Ascending aorta (tissue), 2 donors: ENCODE measurements at regions of chr21 and their contacts with region 1.

Region 1: DNA sequence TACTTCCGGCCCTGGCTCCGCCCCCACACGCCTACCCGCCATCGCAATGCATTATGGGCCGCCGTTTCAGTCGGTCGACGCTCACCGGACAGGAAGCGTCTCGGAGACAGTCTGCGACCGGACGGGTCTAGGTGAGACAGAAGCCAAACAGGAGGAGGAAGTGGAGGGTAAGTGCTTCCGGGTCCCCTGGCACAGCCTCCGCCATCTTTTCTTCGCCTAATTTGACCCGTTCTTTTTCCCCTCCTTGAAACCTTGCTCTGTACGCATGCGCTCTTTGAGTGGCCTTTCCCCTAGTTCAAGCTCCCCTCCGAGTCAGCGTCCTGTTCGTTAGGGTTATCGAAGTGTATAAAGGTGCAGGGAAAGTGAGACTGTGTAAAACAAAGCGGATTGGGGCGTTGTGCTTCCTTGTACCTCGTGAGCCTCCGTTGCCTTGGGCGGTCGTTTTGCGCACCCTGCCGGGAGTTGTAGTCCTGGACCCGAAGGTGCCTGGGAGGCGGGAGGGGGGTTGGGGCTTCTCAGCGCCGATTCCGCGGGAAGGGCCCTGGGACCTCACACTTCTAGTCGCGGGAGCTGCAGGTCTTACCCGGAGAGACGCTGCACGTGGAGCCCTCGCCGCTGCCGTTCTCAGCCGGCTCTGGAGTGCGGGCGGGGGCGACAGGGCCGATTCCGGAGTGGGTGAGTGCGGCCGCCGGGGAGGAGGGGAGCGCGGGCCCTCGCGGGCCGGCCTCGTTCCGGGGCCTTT is at the starts of genes ATP5PF and GABPA:
- DNase-seq: peak; percentile 92 to 99
- H3K4me3 ChIP-seq: peak within 1 kb of the TSS; percentile 82 to 85
- H3K27ac ChIP-seq: peak within 1 kb of the TSS; percentile 98 to 99
- H3K4me1 ChIP-seq: peaks cover 0 to 24% of the 10 kb centered on the region in 2 donors
- H3K27me3 ChIP-seq: no peaks in the 10 kb centered on the region
- CTCF ChIP-seq: peak in 1 of 3 experiments; percentile 12
- total RNA-seq, gene ATP5PF: 81.8 TPM
- total RNA-seq, gene GABPA: 8.9 TPM

Region 2: GRCh38 chr21:25561668-25562641 is 173.1 kb before region 1 on chr21:
- intact Hi-C with region 1: loop called (anchors 2 kb)
- DNase-seq: peak; percentile 36 to 83
- H3K4me3 ChIP-seq: peak overlapping the region; percentile 65 to 86
- H3K27ac ChIP-seq: peak overlapping the region; percentile 83 to 91
- H3K4me1 ChIP-seq: peaks cover 0 to 3% of the 10 kb centered on the region in 2 donors
- H3K27me3 ChIP-seq: no peaks in the 10 kb centered on the region
- CTCF ChIP-seq: peak in 2 of 3 experiments; percentile 20 to 35

Region 3: DNA sequence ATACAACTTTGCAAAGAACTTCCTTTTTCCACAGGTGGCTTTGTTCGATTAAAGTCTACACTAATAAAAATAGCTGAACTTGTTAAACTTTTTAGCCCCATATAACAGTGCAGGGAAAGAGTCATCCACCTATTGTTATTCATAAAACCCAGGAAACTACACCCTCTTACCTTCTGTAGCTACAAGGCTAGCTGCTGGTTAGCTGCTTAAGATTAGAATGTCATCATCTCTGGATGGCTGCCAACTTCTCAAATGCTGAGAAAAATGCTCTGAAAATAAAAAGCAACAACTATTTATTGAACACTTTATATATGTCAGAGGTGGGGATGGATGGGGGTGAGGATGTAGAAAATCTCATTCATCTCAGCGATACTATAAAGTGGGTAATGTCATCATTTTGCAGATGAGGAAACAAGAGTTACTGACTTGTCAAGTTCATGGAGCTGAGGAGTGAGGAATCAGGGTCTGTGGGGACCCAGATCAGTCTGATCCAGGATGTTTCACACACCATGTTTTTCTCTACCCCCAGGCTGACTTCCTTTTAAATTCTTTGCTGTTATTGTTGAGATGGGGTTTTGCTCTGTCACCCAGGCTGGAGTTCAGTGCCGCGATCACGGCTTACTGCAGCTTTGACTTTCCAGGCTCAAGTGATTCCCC is 17.5 kb before region 1 on chr21:
- intact Hi-C with region 1: no loop called
- DNase-seq: no peak
- H3K4me3 ChIP-seq: no peak overlapping the region
- H3K27ac ChIP-seq: peak overlapping the region in 1 of 2 donors; percentile 3
- H3K4me1 ChIP-seq: no peaks in the 10 kb centered on the region
- H3K27me3 ChIP-seq: no peaks in the 10 kb centered on the region
- CTCF ChIP-seq: no peak